CD8-positive, alpha-beta T cell (primary cell): ENCODE measurements at regions of chr11 and their contacts with region 1.

Region 1: DNA sequence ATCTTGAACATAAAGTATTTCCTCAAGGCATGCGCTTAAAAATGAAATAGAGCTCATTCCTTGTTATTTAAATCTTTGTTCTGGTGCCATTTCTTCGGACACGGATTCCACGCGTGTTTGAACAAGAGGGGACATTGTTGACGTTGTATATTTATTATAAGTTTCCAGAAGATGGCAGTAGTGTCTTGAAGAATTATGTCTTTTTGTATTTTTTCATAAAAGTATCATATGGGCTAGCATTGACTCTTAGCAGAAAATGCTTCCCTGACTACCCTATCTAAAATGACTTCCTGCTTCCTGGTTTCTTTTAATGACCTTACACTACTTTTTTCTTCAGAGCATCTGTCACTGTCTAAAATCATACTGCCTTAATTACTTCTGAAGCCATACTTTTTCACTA is 20.4 kb downstream of the BIRC2 start:
- DNase-seq: peak in 2 of 9 experiments; percentile 41 to 61
- ATAC-seq: peak; percentile 77
- H3K4me3 ChIP-seq: no peak overlapping the region
- H3K4me3 Mint-ChIP-seq: no peak overlapping the region
- H3K27ac ChIP-seq: no peak overlapping the region
- H3K27ac Mint-ChIP-seq: peak overlapping the region; percentile 66
- H3K4me1 ChIP-seq: peaks cover 22% of the 10 kb centered on the region
- H3K4me1 Mint-ChIP-seq: peaks cover 42% of the 10 kb centered on the region
- H3K27me3 ChIP-seq: no peaks in the 10 kb centered on the region
- H3K27me3 Mint-ChIP-seq: no peaks in the 10 kb centered on the region
- CTCF ChIP-seq: peak; percentile 70

Region 2: GRCh38 chr11:102614485-102614884 is 247.1 kb after region 1 on chr11:
- CTCF ChIA-PET with region 1: interaction called, 6 read pairs
- POLR2A ChIA-PET with region 1: no interaction called
- intact Hi-C with region 1: loop called in 1 of 2 experiments (anchors 1 kb)
- DNase-seq: peak in 1 of 9 experiments; percentile 9
- ATAC-seq: no peak
- H3K4me3 ChIP-seq: no peak overlapping the region
- H3K4me3 Mint-ChIP-seq: no peak overlapping the region
- H3K27ac ChIP-seq: no peak overlapping the region
- H3K27ac Mint-ChIP-seq: no peak overlapping the region
- H3K4me1 ChIP-seq: no peaks in the 10 kb centered on the region
- H3K4me1 Mint-ChIP-seq: peaks cover 3% of the 10 kb centered on the region
- H3K27me3 ChIP-seq: no peaks in the 10 kb centered on the region
- H3K27me3 Mint-ChIP-seq: no peaks in the 10 kb centered on the region
- CTCF ChIP-seq: no peak

Region 3: DNA sequence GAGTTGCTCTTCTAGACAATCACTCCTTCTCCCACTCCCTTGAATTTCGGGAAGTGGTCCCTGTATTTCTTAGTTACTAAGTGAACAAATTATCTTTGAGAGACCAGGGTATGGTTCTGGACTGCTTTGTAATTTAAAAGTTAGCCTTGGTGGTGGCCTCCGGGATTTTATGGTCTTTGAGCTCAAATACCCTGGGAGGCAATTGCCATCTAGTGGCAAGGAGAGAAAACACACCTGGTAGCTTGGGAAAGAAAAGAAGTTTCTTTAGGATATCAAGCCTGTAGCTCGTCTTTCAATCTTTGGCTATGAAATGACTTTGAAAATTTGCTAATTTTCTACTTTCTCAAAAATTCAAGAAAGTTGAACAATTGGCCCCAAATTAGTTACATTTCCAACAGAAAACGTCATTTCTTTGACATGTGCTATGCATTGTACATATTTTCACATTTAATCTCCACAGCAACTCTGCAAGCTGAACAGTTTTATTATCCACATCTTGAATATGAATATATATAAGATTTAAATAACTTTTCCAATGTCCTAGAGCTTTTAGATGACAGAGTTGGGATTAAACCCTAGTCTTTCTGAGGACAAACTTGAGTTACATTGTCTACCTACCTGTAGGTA is 299.1 kb after region 1 on chr11:
- CTCF ChIA-PET with region 1: interaction called, 11 read pairs
- POLR2A ChIA-PET with region 1: no interaction called
- intact Hi-C with region 1: loop called in 1 of 2 experiments (anchors 5 kb)
- DNase-seq: peak in 4 of 9 experiments; percentile 13 to 54 (median 26)
- ATAC-seq: no peak
- H3K4me3 ChIP-seq: no peak overlapping the region
- H3K4me3 Mint-ChIP-seq: no peak overlapping the region
- H3K27ac ChIP-seq: no peak overlapping the region
- H3K27ac Mint-ChIP-seq: no peak overlapping the region
- H3K4me1 ChIP-seq: no peaks in the 10 kb centered on the region
- H3K4me1 Mint-ChIP-seq: no peaks in the 10 kb centered on the region
- H3K27me3 ChIP-seq: no peaks in the 10 kb centered on the region
- H3K27me3 Mint-ChIP-seq: peaks cover 4% of the 10 kb centered on the region
- CTCF ChIP-seq: peak; percentile 65